Aorta (tissue), 5 donors: ENCODE measurements at regions of chr5 and their contacts with region 1.

Region 1: GRCh38 chr5:91383027-91383955 is at the start of gene ARRDC3:
- DNase-seq: peak; percentile 97 to 99
- ATAC-seq: peak; percentile 87
- H3K4me3 ChIP-seq: peak within 1 kb of the TSS; percentile 91 to 94
- H3K27ac ChIP-seq: peak within 1 kb of the TSS; percentile 78 to 93
- H3K4me1 ChIP-seq: no peaks in the 10 kb centered on the region
- H3K27me3 ChIP-seq: no peaks in the 10 kb centered on the region
- total RNA-seq, gene ARRDC3: 45.6 to 72.2 TPM

Region 2: DNA sequence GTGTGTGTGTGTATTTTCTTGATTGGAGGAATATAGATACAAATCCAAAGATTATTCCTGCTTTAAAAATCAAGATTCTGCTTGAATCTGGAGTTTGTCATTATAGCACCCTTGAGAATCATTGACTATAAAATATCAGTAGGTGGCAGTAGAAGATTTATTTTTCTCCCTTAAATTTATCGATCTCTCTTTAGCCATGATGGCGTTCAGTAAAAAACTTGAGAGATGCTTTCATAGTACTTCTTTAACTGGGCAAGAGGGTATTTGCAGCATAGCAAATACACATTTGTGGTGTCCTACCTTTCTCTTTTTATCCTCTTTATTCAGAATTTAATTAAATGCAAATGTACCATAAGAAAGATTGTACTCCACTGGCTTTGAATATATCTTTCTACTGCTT is 517.0 kb before region 1 on chr5:
- intact Hi-C with region 1: loop called (anchors 2 to 10 kb)
- DNase-seq: no peak
- ATAC-seq: peak; percentile 69
- H3K4me3 ChIP-seq: peak overlapping the region in 1 of 2 donors; percentile 26
- H3K27ac ChIP-seq: no peak overlapping the region
- H3K4me1 ChIP-seq: no peaks in the 10 kb centered on the region
- H3K27me3 ChIP-seq: no peaks in the 10 kb centered on the region

Region 3: GRCh38 chr5:90939211-90939610 is 444.1 kb before region 1 on chr5:
- intact Hi-C with region 1: loop called in 1 of 2 experiments (anchors 5 kb)
- DNase-seq: no peak
- ATAC-seq: no peak
- H3K4me3 ChIP-seq: no peak overlapping the region
- H3K27ac ChIP-seq: no peak overlapping the region
- H3K4me1 ChIP-seq: peaks cover 0 to 2% of the 10 kb centered on the region in 2 donors
- H3K27me3 ChIP-seq: no peaks in the 10 kb centered on the region

Region 4: DNA sequence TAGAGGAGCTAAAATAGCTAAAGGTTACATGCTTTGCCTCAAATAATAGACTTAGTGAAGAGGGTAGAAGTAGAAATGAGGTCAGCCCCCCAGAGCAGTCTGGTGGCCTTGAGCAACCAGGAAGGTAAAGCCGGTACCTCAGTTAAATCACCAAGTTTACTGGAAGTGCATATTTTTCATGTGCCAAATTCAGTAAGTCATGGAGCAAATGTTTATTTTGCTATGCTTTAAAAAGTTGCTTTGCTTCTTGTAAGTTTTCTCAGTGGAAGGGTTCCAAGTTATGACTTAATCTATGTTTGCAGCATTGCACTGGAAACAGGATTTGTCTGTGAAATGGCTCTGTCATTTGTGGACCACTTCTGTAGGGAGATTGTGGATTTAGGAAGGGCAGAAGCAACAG is 256.8 kb before region 1 on chr5:
- intact Hi-C with region 1: loop called in 1 of 2 experiments (anchors 1 kb)
- DNase-seq: peak in 1 of 2 donors; percentile 53
- ATAC-seq: peak; percentile 68
- H3K4me3 ChIP-seq: no peak overlapping the region
- H3K27ac ChIP-seq: peak overlapping the region; percentile 43 to 95
- H3K4me1 ChIP-seq: peaks cover 8 to 15% of the 10 kb centered on the region in 2 donors
- H3K27me3 ChIP-seq: no peaks in the 10 kb centered on the region

Region 5: GRCh38 chr5:91225848-91226686 is 157.2 kb before region 1 on chr5:
- intact Hi-C with region 1: loop called in 1 of 2 experiments (anchors 5 kb)
- DNase-seq: no peak
- ATAC-seq: no peak
- H3K4me3 ChIP-seq: no peak overlapping the region
- H3K27ac ChIP-seq: no peak overlapping the region
- H3K4me1 ChIP-seq: no peaks in the 10 kb centered on the region
- H3K27me3 ChIP-seq: no peaks in the 10 kb centered on the region